Astrocyte of the cerebellum (primary cell): ENCODE measurements at regions of chr20 and their contacts with region 1.

Region 1: DNA sequence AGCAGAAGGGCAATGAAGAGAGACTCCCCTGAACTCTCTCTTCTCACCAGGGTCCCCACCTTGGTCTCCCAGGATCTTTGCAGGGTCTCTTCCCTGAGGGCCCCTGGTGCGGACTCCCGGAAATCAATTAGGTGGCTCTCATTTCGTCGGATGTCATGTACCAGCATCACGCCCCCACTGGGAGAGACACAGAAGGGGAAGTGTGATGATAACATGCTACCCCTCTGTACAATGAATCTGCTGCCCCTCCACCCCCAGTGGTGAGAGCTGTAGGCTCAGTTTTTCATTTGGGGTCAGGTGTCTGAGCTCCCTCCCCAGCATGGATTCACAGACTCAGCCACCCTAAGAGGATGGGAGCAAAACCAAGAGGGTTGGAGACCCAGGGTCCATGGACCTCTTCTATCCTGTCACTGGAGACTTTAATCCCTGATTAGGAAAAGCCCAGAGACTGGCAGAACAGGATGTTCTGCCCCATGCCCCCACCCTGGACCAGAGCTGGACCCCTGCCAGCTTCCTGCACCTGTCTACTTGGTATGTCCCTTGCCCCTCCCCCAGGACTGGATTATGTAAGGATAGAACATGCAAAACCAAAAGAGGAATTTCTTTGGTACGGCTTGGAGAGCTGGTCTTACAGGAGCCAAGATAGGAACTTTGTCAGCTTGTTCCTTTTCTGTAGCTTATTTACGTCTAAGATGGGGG is 11.1 kb downstream of the GGT7 start:
- DNase-seq: no peak
- H3K4me3 ChIP-seq: no peak overlapping the region
- CTCF ChIP-seq: no peak

Region 2: DNA sequence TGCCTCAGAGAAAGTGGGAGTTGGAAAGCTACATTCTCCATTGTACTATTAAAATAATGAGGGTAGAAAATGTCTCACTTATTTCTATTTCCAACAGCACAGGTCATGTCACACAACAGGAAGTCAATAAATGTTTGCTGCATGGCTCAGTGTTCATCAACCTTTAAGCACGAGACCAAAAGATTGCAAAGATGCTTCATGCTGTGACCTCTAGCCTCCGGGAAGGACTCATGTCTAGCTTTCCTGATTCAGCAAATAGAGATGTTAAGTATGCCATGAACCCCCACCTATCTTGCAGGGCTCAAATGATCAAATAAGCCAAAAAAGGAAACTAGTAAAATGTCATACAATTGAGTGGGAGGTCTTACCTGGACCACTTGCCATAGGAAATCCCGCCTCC is 93.4 kb before region 1 on chr20:
- in situ Hi-C with region 1: no loop called
- DNase-seq: no peak
- H3K4me3 ChIP-seq: no peak overlapping the region
- CTCF ChIP-seq: no peak

Region 3: DNA sequence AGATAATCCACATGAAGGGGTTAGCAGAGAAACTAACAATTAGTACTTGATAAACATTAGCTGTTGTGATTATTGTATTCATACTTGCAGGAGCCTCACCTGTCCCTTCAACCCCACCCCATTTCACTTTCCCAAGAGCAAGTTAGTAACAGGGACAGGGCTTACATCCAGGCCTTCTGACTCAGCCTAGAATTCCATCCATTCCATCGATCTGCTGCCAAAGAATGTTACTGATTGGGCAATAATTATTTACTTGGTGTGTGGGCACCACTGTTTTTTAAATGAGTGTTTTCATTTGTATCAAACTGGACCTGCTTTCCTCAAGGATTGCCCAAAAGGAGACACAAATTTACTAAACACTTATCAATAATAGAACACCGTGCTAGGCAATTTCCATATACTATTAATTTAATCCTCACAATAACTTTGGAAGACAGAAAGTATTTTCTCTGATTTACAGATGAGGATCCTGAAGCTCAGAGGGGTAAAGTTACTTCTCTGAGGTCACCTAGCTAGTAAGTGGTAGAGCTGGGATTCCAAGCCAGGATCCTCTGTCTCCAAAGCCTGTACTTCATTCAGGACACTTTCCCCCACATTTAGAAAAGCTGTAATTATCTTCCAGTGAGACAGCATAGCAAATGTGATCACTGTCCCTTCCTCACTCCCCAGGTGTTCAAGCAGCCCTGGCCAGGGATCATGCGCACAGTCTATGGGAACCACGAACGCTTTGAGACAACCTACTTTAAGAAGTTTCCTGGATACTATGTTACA is 61.3 kb after region 1 on chr20:
- in situ Hi-C with region 1: loop called (anchors 5 kb)
- DNase-seq: peak; percentile 71
- H3K4me3 ChIP-seq: no peak overlapping the region
- CTCF ChIP-seq: no peak

Region 4: DNA sequence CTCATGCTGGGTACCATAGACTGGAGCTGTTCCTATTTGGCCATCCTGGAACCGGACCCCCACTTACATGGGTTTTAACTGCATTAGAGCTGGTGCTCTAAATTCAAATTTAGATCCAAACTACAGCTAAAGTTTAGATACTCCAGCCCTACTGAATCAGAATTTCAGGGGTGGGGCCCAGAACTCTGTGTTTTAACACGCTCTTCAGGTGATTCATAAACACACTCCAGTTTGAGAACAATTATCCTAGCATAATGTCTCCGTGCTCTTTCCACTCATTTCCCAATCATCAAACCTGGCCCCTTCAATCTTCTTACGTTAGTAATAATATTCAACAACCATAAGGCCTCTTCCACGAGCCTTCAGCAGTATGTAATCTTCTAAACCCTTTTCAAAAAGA is 215.8 kb after region 1 on chr20:
- in situ Hi-C with region 1: no loop called
- DNase-seq: no peak
- H3K4me3 ChIP-seq: no peak overlapping the region
- CTCF ChIP-seq: no peak